ENCODE measurements at regions of chr14 and their contacts with region 1.

Region 1: GRCh38 chr14:75566321-75566720 is 12.1 kb upstream of the FLVCR2 start:
- DNase-seq: peak; percentile 96
- H3K4me3 Mint-ChIP-seq: peak overlapping the region; percentile 63
- H3K27ac Mint-ChIP-seq: peak overlapping the region; percentile 85
- H3K4me1 Mint-ChIP-seq: peaks cover 77% of the 10 kb centered on the region
- H3K27me3 Mint-ChIP-seq: no peaks in the 10 kb centered on the region

Region 2: GRCh38 chr14:75427482-75428229 is 138.7 kb before region 1 on chr14 and contains the start of gene JDP2:
- CTCF ChIA-PET with region 1: interaction called, 4 read pairs
- intact Hi-C with region 1: loop called (anchors 2 kb)
- DNase-seq: peak; percentile 53
- H3K4me3 Mint-ChIP-seq: peak within 1 kb of the TSS; percentile 73
- H3K27ac Mint-ChIP-seq: no peak within 1 kb of the TSS
- H3K4me1 Mint-ChIP-seq: peaks cover 17% of the 10 kb centered on the region
- H3K27me3 Mint-ChIP-seq: peaks cover 15% of the 10 kb centered on the region
- total RNA-seq, gene JDP2: 2.8 to 3.2 TPM

Region 3: DNA sequence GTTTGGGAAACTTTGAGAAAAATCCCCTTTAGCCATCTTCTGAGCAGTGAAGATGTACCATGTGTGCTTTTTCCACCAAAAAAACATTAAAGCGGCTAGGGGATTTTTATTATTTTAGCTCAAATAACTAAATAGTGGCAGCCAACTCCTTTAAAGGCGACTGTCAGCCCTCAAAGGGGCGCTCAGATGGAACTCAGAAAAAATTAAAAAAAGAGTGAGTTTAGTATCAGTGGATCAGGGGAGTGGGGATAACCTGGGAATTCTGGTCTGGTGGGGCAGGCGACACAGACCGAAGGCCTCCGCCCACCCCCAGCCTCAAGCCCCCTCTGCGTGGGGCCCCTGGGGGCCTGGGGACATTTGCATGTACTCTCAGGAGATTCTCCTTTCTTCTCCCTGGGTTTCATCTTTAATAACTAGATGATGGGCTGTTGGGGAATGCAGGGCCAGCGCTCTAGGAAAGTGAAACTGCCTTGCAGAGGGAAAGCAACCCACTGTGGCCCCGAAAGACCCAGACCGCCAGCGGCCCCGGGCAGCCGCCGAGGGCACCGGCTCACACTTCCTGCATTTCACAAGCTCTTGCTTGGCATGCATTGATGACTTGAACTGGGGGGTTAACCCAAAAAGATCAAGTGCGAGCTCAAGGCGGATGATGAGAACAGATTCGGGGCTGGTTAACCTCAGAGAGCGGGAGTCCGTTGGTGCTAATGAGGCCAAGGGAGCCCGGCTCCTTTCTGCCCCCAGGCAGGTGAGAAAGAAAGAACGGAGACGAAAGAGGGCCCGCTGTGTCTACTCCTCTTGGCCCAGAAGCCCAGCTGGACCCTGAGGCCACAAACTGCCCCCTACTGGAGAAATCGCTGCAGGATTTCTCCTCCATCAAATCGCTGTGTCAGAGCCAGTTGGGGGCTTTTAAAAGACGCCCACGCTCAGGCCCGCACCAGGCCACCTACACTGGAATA is 51.4 kb before region 1 on chr14:
- CTCF ChIA-PET with region 1: interaction called, 88 read pairs
- intact Hi-C with region 1: loop called (anchors 1 kb)
- DNase-seq: peak; percentile 73
- H3K4me3 Mint-ChIP-seq: peak overlapping the region; percentile 70
- H3K27ac Mint-ChIP-seq: peak overlapping the region; percentile 89
- H3K4me1 Mint-ChIP-seq: peaks cover 58% of the 10 kb centered on the region
- H3K27me3 Mint-ChIP-seq: no peaks in the 10 kb centered on the region

Region 4: GRCh38 chr14:75542588-75543091 is 23.7 kb before region 1 on chr14:
- CTCF ChIA-PET with region 1: interaction called, 79 read pairs
- intact Hi-C with region 1: loop called (anchors 1 kb)
- DNase-seq: peak; percentile 97
- H3K4me3 Mint-ChIP-seq: peak overlapping the region; percentile 65
- H3K27ac Mint-ChIP-seq: peak overlapping the region; percentile 99
- H3K4me1 Mint-ChIP-seq: peaks cover 84% of the 10 kb centered on the region
- H3K27me3 Mint-ChIP-seq: no peaks in the 10 kb centered on the region

Region 5: DNA sequence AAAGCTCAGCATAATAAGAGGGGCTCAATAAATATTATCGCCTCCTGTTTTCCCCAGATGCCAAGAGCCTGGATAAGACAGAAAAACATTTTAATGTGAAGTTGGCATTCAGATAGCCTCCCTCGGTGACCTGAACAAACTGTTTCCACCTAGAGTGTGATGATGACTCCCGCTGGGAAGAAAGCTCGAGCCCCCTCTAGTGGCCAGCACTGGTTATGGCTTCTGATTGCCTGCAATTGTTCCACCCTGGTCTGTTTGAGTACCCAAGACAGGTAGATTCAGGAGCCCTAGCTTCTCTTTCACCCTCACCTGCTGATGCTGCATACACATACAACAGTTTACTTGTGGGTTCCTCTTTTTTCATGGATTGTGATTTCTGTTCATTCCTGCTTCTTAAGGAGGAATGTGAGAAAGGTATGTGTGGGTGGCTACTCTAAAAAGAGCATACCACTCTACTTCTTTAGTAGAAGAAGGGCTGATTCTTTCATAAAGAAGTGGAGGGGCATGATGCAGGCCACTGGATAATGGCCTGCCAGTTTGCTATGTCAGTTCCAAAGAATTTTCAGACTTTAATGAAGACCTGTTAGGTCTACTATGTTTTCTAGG is 87.9 kb after region 1 on chr14:
- CTCF ChIA-PET with region 1: interaction called, 255 read pairs
- intact Hi-C with region 1: no loop called
- DNase-seq: peak; percentile 93
- H3K4me3 Mint-ChIP-seq: no peak overlapping the region
- H3K27ac Mint-ChIP-seq: no peak overlapping the region
- H3K4me1 Mint-ChIP-seq: peaks cover 6% of the 10 kb centered on the region
- H3K27me3 Mint-ChIP-seq: no peaks in the 10 kb centered on the region

Measured in activated naive CD4-positive, alpha-beta T cell treated with anti-CD3 and anti-CD28 coated beads for 36 hours (primary cell).